ENCODE measurements at regions of chr7 and their contacts with region 1.

Region 1: DNA sequence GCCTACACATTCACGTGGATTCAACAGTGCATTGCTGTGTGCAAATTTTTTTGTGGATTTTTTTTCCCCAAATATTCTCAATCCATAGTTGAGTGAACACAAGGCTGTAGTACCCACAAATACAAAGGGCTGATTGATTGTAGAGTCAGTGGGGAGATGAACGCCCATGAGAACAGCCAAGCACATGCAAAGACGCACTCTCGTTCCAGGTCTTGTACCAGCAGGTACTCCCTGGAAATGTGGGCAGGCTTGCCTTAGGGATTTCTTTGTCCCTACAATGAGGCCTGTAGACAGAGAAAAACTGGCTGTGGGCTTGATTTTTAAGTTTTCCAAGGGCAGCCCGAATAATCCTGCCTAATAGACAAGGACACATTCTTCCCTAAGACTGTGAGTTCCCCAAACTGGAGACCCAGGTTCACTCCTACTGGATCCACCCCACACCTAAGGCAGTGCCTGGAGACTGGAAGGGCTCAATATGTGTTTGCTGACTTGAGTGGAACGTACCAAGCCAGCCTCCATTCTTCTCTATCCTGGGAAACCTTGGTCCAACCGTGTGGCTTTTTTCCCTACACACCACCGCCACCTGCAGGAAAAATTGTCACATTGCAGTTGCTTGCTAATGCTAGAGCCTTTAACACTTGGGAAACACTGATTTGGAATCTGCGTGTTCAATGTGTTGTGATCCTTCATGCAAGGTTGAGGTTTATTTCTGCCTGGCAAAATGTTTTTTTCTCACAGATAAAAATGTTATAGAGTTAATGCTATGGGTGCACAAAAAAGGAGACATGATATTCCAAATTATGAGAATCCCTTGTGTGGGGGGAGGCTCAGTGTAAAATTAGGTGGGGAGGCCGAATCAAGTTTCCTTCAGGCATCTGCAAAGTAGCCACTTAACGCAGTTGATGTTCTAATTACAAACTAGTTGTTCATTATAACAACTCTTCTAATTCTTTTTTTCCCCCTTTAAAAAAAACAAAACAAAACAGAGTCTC is 49.3 kb downstream of the PPP1R17 start:
- DNase-seq: peak; percentile 37 to 65 (median 54)
- H3K4me3 ChIP-seq: no peak overlapping the region
- H3K4me3 Mint-ChIP-seq: no peak overlapping the region
- H3K27ac ChIP-seq: no peak overlapping the region
- H3K27ac Mint-ChIP-seq: no peak overlapping the region
- H3K4me1 ChIP-seq: no peaks in the 10 kb centered on the region
- H3K4me1 Mint-ChIP-seq: no peaks in the 10 kb centered on the region
- H3K27me3 ChIP-seq: no peaks in the 10 kb centered on the region
- H3K27me3 Mint-ChIP-seq: peaks cover 2 to 5% (median 3%) of the 10 kb centered on the region in 3 donors
- CTCF ChIP-seq: peak; percentile 95

Region 2: DNA sequence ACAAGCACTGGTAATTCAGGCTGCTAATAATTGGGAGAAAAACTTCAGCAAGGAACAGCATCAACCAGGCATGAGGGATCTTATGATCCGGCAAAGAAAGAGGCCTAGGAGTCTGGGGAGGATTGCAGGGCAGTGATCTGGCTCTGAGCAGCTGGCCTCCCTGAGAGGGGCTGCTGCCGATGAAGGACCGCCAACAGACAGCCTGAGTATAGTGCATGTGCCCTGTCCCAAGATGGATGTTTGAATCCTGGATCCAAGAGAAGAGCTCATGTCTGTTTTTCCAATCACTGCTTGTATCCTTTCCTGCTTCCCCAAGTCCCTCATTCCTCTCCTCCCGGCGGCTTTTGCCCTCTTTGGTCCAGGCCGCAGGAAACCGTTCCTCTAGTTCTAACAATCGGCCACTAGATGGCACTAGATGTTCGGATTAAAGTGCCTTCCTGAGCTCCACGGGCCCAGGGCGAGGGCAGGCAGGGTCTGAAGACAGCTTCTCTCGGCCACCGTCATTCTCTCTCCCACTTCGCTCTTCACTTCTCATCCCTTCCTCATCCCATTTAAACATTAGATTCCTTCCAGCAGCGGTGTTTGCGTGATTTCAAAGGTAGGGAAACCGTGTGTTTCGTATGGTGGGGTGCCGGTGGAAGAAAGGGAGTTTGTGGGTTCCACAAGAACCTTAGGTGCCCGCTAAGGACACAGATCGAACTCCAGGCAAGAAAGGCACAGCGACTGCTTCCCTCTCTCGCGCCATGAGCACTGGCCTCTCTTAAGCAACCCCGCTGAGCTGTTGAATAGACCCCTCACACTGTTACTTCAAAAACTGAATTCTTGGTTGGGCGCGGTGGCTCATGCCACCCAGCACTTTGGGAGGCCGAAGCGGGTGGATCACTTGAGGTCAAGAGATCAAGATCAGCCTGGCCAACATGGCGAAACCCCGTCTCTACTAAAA is 601.8 kb before region 1 on chr7:
- intact Hi-C with region 1: loop called (anchors 5 to 10 kb)
- DNase-seq: peak; percentile 9 to 40 (median 32)
- H3K4me3 ChIP-seq: no peak overlapping the region
- H3K4me3 Mint-ChIP-seq: peak overlapping the region in 1 of 2 donors; percentile 58
- H3K27ac ChIP-seq: no peak overlapping the region
- H3K27ac Mint-ChIP-seq: no peak overlapping the region
- H3K4me1 ChIP-seq: no peaks in the 10 kb centered on the region
- H3K4me1 Mint-ChIP-seq: peaks cover 4% of the 10 kb centered on the region
- H3K27me3 ChIP-seq: no peaks in the 10 kb centered on the region
- H3K27me3 Mint-ChIP-seq: peaks cover 2 to 7% (median 3%) of the 10 kb centered on the region in 3 donors
- CTCF ChIP-seq: peak; percentile 80

Region 3: DNA sequence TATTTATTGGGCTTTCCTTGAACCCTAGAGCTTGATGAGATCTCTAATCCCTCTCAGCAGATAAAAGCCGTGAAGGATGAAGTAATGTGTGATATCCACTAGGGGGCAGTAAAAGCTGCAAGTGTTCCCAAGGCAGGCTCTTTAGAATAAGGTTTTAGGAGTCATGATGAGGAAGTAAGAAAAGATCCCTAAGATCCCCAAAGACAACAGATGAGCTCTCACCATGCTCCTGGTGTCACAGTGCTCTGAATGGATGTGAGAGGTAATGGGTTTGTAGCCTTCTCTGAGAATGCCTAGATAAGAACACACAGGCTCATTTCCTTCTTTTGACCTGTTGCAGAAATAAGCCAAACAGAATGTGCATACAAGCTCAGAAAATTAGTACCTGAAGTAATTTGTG is 292.8 kb before region 1 on chr7:
- intact Hi-C with region 1: loop called (anchors 2 to 5 kb)
- DNase-seq: peak; percentile 24 to 63 (median 46)
- H3K4me3 ChIP-seq: no peak overlapping the region
- H3K4me3 Mint-ChIP-seq: no peak overlapping the region
- H3K27ac ChIP-seq: no peak overlapping the region
- H3K27ac Mint-ChIP-seq: peak overlapping the region in 1 of 7 donors; percentile 1
- H3K4me1 ChIP-seq: no peaks in the 10 kb centered on the region
- H3K4me1 Mint-ChIP-seq: no peaks in the 10 kb centered on the region
- H3K27me3 ChIP-seq: no peaks in the 10 kb centered on the region
- H3K27me3 Mint-ChIP-seq: peaks cover 0 to 5% (median 5%) of the 10 kb centered on the region in 3 donors
- CTCF ChIP-seq: peak; percentile 85

Region 4: DNA sequence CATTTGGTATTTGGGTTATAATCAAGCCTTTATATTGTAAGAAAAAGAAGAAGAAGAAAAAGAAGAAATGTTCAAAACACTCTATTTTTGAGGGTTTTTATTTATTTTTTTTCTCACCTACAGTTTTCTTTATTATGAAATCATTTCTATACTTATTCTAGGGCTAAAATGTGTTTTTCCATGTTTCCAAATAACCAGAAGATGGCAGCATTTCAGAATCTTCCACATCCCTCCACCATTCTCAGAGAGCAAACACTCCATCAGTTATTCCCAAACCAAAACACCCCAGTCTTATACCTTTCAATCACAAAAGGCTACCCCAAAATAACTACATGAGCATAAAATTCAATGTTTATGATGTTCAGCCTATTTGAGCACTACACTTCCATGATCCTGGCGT is 88.0 kb before region 1 on chr7:
- intact Hi-C with region 1: loop called in 1 of 2 experiments (anchors 10 kb)
- DNase-seq: peak in 1 of 3 donors; percentile 21
- H3K4me3 ChIP-seq: no peak overlapping the region
- H3K4me3 Mint-ChIP-seq: no peak overlapping the region
- H3K27ac ChIP-seq: peak overlapping the region in 1 of 2 donors; percentile 23
- H3K27ac Mint-ChIP-seq: peak overlapping the region in 5 of 7 donors; percentile 41 to 89 (median 71)
- H3K4me1 ChIP-seq: peaks cover 17 to 18% of the 10 kb centered on the region in 2 donors
- H3K4me1 Mint-ChIP-seq: peaks cover 24% of the 10 kb centered on the region
- H3K27me3 ChIP-seq: no peaks in the 10 kb centered on the region
- H3K27me3 Mint-ChIP-seq: peaks cover 0 to 3% (median 1%) of the 10 kb centered on the region in 3 donors
- CTCF ChIP-seq: peak; percentile 61

Region 5: GRCh38 chr7:31860922-31861321 is 124.6 kb after region 1 on chr7:
- intact Hi-C with region 1: no loop called
- DNase-seq: no peak
- H3K4me3 ChIP-seq: no peak overlapping the region
- H3K4me3 Mint-ChIP-seq: no peak overlapping the region
- H3K27ac ChIP-seq: no peak overlapping the region
- H3K27ac Mint-ChIP-seq: no peak overlapping the region
- H3K4me1 ChIP-seq: peaks cover 9 to 11% of the 10 kb centered on the region in 2 donors
- H3K4me1 Mint-ChIP-seq: peaks cover 9% of the 10 kb centered on the region
- H3K27me3 ChIP-seq: no peaks in the 10 kb centered on the region
- H3K27me3 Mint-ChIP-seq: no peaks in the 10 kb centered on the region
- CTCF ChIP-seq: no peak